Activated naive CD4-positive, alpha-beta T cell treated with anti-CD3 and anti-CD28 coated beads, Interleukin-2, amount 10 ng/mL, durations not matched to agents 7 days and 5 days (primary cell): ENCODE measurements at regions of chr2 and their contacts with region 1.

Region 1: GRCh38 chr2:28751252-28751955 is at the start of gene PPP1CB:
- DNase-seq: peak; percentile 96
- H3K4me3 Mint-ChIP-seq: peak within 1 kb of the TSS; percentile 87
- H3K27ac Mint-ChIP-seq: peak within 1 kb of the TSS; percentile 97
- H3K4me1 Mint-ChIP-seq: peaks cover 57% of the 10 kb centered on the region
- H3K27me3 Mint-ChIP-seq: peaks cover 3% of the 10 kb centered on the region

Region 2: GRCh38 chr2:28610583-28611201 is 140.7 kb before region 1 on chr2:
- CTCF ChIA-PET with region 1: interaction called, 16 read pairs
- DNase-seq: no peak
- H3K4me3 Mint-ChIP-seq: no peak overlapping the region
- H3K27ac Mint-ChIP-seq: peak overlapping the region; percentile 52
- H3K4me1 Mint-ChIP-seq: peaks cover 33% of the 10 kb centered on the region
- H3K27me3 Mint-ChIP-seq: no peaks in the 10 kb centered on the region

Region 3: DNA sequence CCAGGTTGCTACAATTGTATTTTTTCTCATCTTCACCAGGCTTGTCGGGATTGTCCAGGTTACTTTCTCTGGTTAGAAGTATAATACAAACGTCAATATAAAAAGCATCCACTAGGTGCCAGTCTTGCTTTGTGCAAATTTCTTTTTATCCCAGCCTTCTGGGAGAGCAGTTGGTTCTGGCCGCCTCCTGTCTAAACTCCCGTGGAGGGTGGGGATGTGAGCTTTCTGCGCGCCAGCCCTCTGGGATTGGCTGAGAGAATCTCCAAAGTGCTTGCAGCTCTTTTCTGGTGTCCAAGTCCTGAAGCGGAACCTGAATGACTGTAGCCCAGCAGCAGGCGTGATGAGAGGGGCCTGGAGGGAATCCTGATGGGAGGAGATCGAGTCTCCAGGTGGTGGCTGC is 207.3 kb after region 1 on chr2:
- CTCF ChIA-PET with region 1: no interaction called
- DNase-seq: peak; percentile 56
- H3K4me3 Mint-ChIP-seq: no peak overlapping the region
- H3K27ac Mint-ChIP-seq: no peak overlapping the region
- H3K4me1 Mint-ChIP-seq: peaks cover 6% of the 10 kb centered on the region
- H3K27me3 Mint-ChIP-seq: peaks cover 39% of the 10 kb centered on the region